ENCODE measurements at regions of chr20 and their contacts with region 1.

Region 1: GRCh38 chr20:8049310-8049709 is 29.7 kb upstream of the TMX4 start:
- DNase-seq: no peak
- ATAC-seq: no peak
- H3K4me3 ChIP-seq: no peak overlapping the region
- H3K27ac ChIP-seq: no peak overlapping the region
- H3K4me1 ChIP-seq: no peaks in the 10 kb centered on the region
- H3K27me3 ChIP-seq: peaks cover 5% of the 10 kb centered on the region; the same call in 1 of the 2 replicates
- CTCF ChIP-seq: no peak
- POLR2A ChIP-seq: no peak
- RAD21 ChIP-seq: no peak

Region 2: GRCh38 chr20:6886065-6886729 is 1163.1 kb before region 1 on chr20:
- CTCF ChIA-PET with region 1: no interaction called
- POLR2A ChIA-PET with region 1: no interaction called
- dilution Hi-C with region 1: no loop called
- in situ Hi-C with region 1: no loop called
- intact Hi-C with region 1: no loop called
- DNase-seq: no peak
- ATAC-seq: no peak
- H3K4me3 ChIP-seq: no peak overlapping the region
- H3K27ac ChIP-seq: no peak overlapping the region
- H3K4me1 ChIP-seq: no peaks in the 10 kb centered on the region
- H3K27me3 ChIP-seq: no peaks in the 10 kb centered on the region
- CTCF ChIP-seq: no peak
- POLR2A ChIP-seq: no peak
- RAD21 ChIP-seq: no peak

Region 3: DNA sequence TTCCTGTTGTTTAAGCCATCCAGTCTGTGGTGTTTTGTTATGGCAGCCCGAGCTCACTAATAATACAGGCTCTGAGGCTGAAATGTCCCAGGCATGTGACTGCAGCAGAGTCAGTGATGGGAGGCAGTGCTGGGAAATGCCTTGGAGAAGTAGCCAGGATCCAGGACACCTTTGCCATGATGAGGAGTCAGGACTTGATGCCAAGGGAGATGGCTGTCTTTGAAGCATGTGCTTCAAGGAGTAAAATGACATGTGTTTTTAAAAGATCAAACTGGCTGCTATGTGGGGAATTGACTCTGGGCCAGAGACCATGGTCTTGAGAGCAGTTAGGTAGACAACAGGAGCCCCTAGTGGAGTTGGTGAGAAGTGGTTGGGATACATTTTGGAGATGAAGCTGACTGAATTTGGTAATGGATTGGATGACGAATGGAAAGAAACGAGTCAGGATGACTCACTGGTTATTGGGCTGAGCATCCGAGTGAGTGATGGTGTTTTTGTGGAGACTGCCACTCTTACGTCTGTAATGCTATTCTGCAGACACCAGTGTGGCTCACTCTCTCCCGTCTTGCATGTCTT is 404.9 kb after region 1 on chr20:
- CTCF ChIA-PET with region 1: no interaction called
- POLR2A ChIA-PET with region 1: no interaction called
- dilution Hi-C with region 1: no loop called
- in situ Hi-C with region 1: no loop called
- intact Hi-C with region 1: loop called (anchors 5 kb)
- DNase-seq: peak; percentile 97
- ATAC-seq: peak; percentile 96
- H3K4me3 ChIP-seq: no peak overlapping the region
- H3K27ac ChIP-seq: no peak overlapping the region
- H3K4me1 ChIP-seq: peaks cover 3% of the 10 kb centered on the region
- H3K27me3 ChIP-seq: no peaks in the 10 kb centered on the region
- CTCF ChIP-seq: peak; percentile 73
- POLR2A ChIP-seq: no peak
- RAD21 ChIP-seq: peak; percentile 82

Region 4: GRCh38 chr20:8557711-8558110 is 508.4 kb after region 1 on chr20:
- CTCF ChIA-PET with region 1: no interaction called
- POLR2A ChIA-PET with region 1: no interaction called
- dilution Hi-C with region 1: no loop called
- in situ Hi-C with region 1: no loop called
- intact Hi-C with region 1: no loop called
- DNase-seq: peak; percentile 59
- ATAC-seq: no peak
- H3K4me3 ChIP-seq: no peak overlapping the region
- H3K27ac ChIP-seq: no peak overlapping the region
- H3K4me1 ChIP-seq: no peaks in the 10 kb centered on the region
- H3K27me3 ChIP-seq: no peaks in the 10 kb centered on the region
- CTCF ChIP-seq: no peak
- POLR2A ChIP-seq: no peak
- RAD21 ChIP-seq: no peak